A673 (cell line): ENCODE measurements at regions of chr20 and their contacts with region 1.

Region 1: DNA sequence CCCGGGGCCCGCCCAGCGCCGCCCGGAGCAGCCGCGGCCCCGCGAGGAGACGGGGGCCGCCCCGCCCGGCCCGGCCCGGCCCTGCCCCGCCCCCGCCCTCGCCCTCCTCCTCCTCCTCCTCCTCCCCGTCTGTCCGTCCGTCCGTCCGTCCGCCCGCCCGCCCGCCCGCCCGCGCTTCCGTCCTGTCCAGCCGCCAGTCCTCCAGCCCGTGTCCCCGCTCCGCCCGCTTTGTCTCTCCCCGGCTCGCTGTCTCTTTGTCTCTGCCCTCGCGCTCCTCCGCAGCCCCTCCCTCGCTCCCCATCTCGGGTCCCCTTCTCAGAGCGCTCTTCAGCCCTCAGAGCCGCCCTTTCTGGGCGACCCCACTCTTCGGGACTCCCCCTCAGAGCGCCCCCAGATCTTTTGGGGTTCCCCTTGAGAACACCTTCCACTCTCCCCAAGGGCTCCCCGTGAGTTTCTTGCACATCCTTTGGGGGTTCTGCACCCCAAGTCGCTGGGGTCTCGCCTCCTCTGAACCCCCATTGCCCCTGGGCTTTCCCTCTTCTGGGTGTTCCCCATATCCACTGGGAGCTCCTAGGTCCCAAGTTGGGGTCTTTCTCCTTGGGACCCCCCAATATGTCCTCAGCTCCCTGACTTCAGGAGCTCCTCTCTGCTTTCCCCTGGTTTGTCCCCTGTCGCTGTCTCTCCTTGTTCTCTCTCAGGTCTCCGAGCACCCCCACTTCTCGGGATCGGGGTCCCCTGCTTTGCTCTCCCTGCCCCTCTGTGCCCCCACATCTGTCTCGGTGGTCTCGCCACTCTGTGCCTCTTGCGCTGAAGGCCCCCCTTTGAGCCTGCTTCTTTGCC is 79.5 kb upstream of the MYL9 start:
- DNase-seq: peak; percentile 62
- H3K4me3 ChIP-seq: peak overlapping the region; percentile 85
- H3K27ac ChIP-seq: peak overlapping the region; percentile 70
- H3K4me1 ChIP-seq: peaks cover 34% of the 10 kb centered on the region
- H3K27me3 ChIP-seq: no peaks in the 10 kb centered on the region
- CTCF ChIP-seq: no peak

Region 2: DNA sequence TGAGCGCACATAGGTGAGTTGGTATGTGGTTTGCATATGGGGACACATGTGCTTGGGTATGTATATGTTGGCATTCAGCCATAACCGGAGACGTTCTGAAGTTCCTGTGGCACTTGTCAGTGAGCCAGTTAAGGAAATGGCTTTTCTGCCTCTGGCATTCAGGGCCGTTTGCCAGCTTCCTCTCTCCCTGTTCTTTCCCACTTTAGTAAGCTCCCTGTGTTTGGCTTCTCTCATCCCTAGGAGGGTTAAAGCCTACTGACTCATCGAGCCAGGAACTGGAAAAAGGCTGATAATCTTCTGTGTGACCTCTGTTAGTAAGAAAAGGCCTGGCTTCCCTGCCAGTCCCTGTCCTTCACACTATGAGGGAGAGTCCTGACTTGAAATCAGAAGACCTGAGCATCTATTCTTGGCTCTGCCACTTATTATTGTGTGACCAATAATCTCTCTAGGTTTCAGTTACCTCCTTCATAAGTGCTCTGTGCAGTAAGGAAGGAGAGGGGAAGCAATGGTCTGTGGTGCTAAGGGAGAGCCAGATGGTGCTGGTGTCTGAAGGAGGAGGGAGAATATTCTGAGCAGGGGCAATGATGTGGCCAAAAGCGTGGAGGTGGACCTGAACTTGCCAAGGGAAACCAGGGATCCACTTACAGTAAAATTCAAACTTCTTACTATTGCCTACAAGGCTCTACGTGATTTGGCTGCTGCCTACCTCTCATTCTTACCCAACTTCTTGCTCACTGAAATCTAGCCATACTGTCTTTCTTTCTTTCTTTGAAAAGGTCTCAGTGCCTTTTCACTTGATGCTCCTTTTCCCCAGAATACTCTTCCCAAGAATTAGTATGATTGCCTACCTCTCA is 1554.0 kb before region 1 on chr20:
- CTCF ChIA-PET with region 1: no interaction called
- POLR2A ChIA-PET with region 1: interaction called, 11 read pairs
- intact Hi-C with region 1: no loop called
- DNase-seq: peak; percentile 89
- H3K4me3 ChIP-seq: no peak overlapping the region
- H3K27ac ChIP-seq: peak overlapping the region; percentile 71
- H3K4me1 ChIP-seq: peaks cover 14% of the 10 kb centered on the region
- H3K27me3 ChIP-seq: no peaks in the 10 kb centered on the region
- CTCF ChIP-seq: no peak

Region 3: DNA sequence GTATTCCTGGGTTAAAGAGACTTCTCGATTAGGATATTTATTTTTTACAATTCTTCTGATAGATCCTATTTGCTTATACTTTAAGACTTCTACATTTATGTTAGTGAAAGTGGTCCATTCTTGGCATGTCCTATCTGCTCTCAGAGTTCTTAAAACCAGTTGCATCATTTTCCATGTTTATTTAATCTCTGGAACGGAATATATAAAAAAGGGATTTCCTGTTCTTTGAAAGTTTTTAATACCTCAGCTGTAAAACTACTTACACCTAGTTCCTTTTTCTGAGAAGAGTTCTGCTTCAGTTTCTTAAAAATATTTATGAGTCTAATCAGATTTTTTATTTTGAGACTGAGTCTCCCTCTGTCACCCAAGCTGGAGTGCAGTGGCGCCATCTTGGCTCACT is 61.5 kb after region 1 on chr20:
- CTCF ChIA-PET with region 1: no interaction called
- POLR2A ChIA-PET with region 1: no interaction called
- intact Hi-C with region 1: loop called (anchors 1 kb)
- DNase-seq: peak; percentile 91
- H3K4me3 ChIP-seq: no peak overlapping the region
- H3K27ac ChIP-seq: peak overlapping the region; percentile 91
- H3K4me1 ChIP-seq: peaks cover 36% of the 10 kb centered on the region
- H3K27me3 ChIP-seq: no peaks in the 10 kb centered on the region
- CTCF ChIP-seq: no peak

Region 4: GRCh38 chr20:36573103-36573794 is 111.4 kb after region 1 on chr20 and contains the start of gene TGIF2:
- CTCF ChIA-PET with region 1: no interaction called
- POLR2A ChIA-PET with region 1: no interaction called
- intact Hi-C with region 1: loop called (anchors 2 kb)
- DNase-seq: peak; percentile 98
- H3K4me3 ChIP-seq: peak within 1 kb of the TSS; percentile 95
- H3K27ac ChIP-seq: peak within 1 kb of the TSS; percentile 95
- H3K4me1 ChIP-seq: peaks cover 36% of the 10 kb centered on the region
- H3K27me3 ChIP-seq: no peaks in the 10 kb centered on the region
- CTCF ChIP-seq: no peak
- total RNA-seq, gene TGIF2: 54.9 and 59.0 TPM in 2 replicates